Astrocyte of the cerebellum (primary cell): ENCODE measurements at regions of chr7 and their contacts with region 1.

Region 1: DNA sequence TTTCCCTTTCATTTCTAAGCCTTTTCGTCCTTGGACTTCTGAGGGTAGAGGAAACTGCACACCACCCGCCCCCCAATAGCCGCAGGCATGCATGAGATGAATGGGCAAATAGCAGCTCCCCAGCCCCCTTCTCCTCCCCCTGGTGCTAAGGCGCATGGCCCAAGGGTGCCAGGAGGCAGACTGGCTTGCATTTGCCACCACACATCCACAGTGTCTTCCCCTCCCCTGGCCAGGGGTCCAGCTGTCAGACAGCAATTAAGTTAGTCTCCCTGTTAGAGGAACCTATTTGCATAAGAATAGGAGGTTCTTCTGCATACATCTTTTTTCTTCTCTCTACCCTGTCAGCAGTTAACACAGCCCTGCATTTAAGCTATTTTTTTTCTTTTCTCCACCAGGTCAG is 20.2 kb downstream of the TOMM7 start:
- DNase-seq: no peak
- H3K4me3 ChIP-seq: no peak overlapping the region
- CTCF ChIP-seq: no peak

Region 2: GRCh38 chr7:22759721-22760120 is 42.7 kb before region 1 on chr7:
- in situ Hi-C with region 1: loop called (anchors 10 kb)
- DNase-seq: no peak
- H3K4me3 ChIP-seq: no peak overlapping the region
- CTCF ChIP-seq: no peak

Region 3: DNA sequence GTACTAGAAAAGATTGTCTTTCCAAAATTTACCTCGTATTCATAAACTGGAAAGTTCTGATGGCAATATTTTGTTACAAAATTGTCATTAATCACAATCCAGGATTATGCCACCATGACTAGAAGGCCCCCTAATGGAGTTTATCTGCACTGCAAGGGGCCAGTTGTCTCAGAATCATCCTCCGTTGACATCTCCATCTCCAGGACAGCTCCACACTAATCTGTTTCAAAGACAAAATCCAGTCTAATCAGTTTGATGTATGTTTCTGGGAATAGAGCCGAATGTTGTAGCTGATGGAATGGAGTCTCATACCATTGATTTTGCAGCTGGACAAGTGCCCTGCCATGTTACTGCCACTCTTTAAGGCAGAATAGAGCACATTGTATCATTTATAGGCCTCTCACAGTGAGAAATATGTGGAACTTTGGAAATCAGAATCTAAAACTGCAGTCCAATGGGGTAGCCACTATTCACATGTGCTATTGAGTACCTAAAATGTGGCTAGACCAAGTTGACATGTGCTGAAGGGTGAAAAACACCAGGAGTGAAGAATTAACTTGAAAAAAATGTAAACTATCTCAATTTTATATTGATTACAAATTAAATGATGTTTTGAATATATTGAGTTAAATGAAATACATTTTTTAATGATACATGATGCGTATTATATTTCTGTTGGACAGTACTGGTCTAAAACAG is 58.5 kb after region 1 on chr7:
- in situ Hi-C with region 1: no loop called
- DNase-seq: no peak
- H3K4me3 ChIP-seq: no peak overlapping the region
- CTCF ChIP-seq: peak; percentile 44